ENCODE measurements at regions of chr5 and their contacts with region 1.

Region 1: DNA sequence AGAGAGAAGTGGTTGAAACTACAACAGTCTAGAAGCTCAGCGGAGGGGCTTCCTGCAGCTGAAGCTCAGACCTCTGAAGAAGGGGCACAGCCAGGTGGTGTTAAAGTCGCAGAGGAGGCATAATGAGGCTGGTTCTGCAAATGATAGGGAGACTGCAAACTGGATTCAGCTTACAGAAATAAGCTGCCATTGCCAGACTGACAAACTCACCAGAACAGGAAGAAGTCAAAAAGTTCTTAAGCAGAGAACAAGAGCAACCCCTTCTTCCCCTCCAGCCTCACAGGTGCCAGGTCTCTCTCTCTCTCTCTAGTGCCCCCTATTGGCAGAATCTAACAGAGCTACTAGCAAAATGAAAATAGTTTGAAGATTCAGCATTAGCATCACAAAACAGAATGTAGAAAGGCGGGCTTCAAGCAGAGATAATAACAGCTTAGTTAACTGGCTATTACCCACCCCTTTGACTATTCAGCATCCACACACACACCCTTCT is 76.7 kb downstream of the GRAMD2B start:
- DNase-seq: no peak
- ATAC-seq: no peak
- H3K4me3 ChIP-seq: no peak overlapping the region
- H3K27ac ChIP-seq: no peak overlapping the region
- H3K4me1 ChIP-seq: peaks cover 0 to 20% (median 15%) of the 10 kb centered on the region in 9 donors
- H3K27me3 ChIP-seq: no peaks in the 10 kb centered on the region
- CTCF ChIP-seq: peak; percentile 30 to 61 (median 51)

Region 2: DNA sequence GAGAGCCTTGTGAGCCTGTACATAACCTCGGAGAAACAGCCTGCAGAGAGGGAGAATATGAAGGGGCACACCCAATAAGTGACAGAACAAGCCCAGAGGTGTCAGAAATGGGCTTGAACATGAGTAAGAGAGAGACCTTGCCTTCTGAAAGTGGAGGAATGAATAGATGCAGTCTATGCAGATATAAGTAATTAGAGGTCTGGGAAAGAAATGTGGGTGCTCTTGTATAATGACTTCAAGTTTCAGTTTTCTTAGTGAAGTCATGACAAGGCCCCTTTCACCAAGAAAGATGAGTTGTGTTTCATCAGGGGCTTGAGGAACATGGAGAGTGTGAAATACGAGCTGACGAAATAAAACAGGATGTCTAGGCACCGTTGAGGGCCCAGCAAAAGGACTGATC is 61.6 kb before region 1 on chr5:
- intact Hi-C with region 1: loop called in 1 of 10 experiments (anchors 10 kb)
- DNase-seq: no peak
- ATAC-seq: no peak
- H3K4me3 ChIP-seq: no peak overlapping the region
- H3K27ac ChIP-seq: no peak overlapping the region
- H3K4me1 ChIP-seq: peaks cover 0 to 20% (median 4%) of the 10 kb centered on the region in 9 donors
- H3K27me3 ChIP-seq: no peaks in the 10 kb centered on the region
- CTCF ChIP-seq: no peak